ENCODE measurements at regions of chr1 and their contacts with region 1.

Region 1: GRCh38 chr1:88523854-88524528 is 160.1 kb upstream of the PKN2 start:
- DNase-seq: no peak
- H3K4me3 Mint-ChIP-seq: no peak overlapping the region
- H3K27ac Mint-ChIP-seq: no peak overlapping the region
- H3K4me1 Mint-ChIP-seq: no peaks in the 10 kb centered on the region
- H3K27me3 Mint-ChIP-seq: no peaks in the 10 kb centered on the region
- CTCF ChIP-seq: no peak

Region 2: DNA sequence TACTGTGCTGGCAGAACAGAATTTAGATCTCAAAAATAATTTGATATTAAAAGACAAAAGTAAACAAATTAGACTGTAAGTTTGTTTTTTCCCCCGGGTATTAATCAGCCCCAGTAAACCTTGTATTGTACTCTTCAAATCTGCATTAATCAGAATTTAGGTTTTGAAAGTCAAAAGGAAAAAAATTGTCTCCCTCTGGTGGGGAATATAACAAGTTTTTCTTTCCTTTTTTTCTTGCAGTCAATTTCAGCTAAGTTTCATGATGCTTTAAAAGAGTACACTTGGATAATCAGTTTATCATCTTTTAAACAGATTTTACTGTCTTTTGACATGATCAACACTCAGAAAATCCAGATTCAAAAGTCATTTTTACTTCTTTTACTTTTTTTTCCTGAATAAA is 25.5 kb after region 1 on chr1:
- CTCF ChIA-PET with region 1: interaction called, 3 read pairs
- POLR2A ChIA-PET with region 1: no interaction called
- intact Hi-C with region 1: loop called (anchors 2 kb)
- DNase-seq: peak; percentile 27
- H3K4me3 Mint-ChIP-seq: no peak overlapping the region
- H3K27ac Mint-ChIP-seq: no peak overlapping the region
- H3K4me1 Mint-ChIP-seq: no peaks in the 10 kb centered on the region
- H3K27me3 Mint-ChIP-seq: no peaks in the 10 kb centered on the region
- CTCF ChIP-seq: no peak

Region 3: GRCh38 chr1:88571510-88571909 is 47.5 kb after region 1 on chr1:
- CTCF ChIA-PET with region 1: no interaction called
- POLR2A ChIA-PET with region 1: no interaction called
- intact Hi-C with region 1: no loop called
- DNase-seq: no peak
- H3K4me3 Mint-ChIP-seq: no peak overlapping the region
- H3K27ac Mint-ChIP-seq: no peak overlapping the region
- H3K4me1 Mint-ChIP-seq: no peaks in the 10 kb centered on the region
- H3K27me3 Mint-ChIP-seq: peaks cover 22% of the 10 kb centered on the region
- CTCF ChIP-seq: no peak